ENCODE measurements at regions of chr10 and their contacts with region 1.

Region 1: DNA sequence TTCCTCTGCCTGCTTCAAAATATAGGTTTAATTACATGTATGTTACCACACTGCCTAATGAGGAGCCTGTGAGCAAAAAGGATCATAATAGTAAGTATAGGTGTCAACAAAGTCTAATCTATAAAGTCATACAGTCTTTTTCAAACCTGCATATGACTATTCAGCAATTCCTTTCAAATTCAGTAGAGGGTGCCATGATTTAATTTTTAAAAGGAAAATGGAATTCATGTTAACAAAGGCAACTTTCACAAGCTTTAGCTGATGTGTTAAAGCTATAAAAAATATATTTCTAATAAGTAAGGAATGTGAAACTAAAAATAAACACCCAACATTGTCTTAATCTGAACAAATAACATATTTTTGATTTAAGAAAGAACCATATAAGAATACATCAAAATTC is 52.1 kb downstream of the MPP7 start:
- DNase-seq: no peak
- H3K4me3 ChIP-seq: no peak overlapping the region
- H3K27me3 ChIP-seq: no peaks in the 10 kb centered on the region
- CTCF ChIP-seq: peak; percentile 42; the same call in 1 of the 2 replicates

Region 2: DNA sequence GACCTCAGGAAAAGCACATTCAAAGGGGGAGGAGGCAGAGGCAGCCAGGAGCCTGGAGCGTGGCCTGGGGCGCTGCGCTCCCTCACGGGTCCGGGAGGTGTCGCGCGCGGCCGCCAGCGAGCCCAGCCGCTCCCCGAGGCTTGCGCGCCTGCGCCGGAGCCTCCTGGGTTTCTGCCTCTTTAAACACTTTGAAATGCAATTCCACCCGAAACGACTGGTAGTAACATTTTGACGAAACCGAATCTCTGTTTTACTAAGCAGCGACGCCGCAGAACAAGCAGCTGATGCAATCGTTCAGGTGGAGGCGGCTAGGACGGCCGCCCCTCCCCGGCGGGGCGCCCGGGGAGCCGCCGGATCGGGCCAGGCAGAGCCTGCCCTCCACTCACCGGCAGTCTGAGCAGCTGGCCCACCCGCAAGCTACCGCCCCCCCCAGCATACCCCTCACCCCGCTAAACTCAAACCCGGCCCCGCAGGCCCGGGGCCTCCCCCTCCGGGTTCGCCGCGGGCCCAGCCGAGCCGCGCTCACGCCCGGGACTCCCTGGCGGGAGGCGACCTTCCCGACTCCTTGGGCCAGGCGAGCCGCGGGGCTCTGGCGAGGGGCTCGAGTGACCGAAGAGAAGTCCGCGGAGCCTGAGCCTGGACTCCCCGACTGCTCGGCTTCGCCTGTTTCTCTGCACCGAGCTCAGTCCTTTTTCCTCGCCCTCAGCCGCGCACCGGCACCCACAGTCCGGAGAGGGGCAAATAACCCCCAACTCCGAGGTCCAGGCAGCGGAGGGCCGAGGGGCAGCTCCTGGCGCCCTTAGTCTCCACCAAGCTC is 508.4 kb before region 1 on chr10:
- CTCF ChIA-PET with region 1: interaction called, 11 read pairs
- POLR2A ChIA-PET with region 1: no interaction called
- DNase-seq: peak; percentile 61
- H3K4me3 ChIP-seq: peak overlapping the region; percentile 91
- H3K27me3 ChIP-seq: no peaks in the 10 kb centered on the region
- CTCF ChIP-seq: peak; percentile 56

Region 3: GRCh38 chr10:28179006-28179742 is 71.6 kb before region 1 on chr10:
- CTCF ChIA-PET with region 1: no interaction called
- POLR2A ChIA-PET with region 1: no interaction called
- DNase-seq: no peak
- H3K4me3 ChIP-seq: no peak overlapping the region
- H3K27me3 ChIP-seq: no peaks in the 10 kb centered on the region
- CTCF ChIP-seq: peak; percentile 63

Region 4: GRCh38 chr10:28393966-28394568 is 143.3 kb after region 1 on chr10:
- CTCF ChIA-PET with region 1: interaction called, 42 read pairs
- POLR2A ChIA-PET with region 1: no interaction called
- DNase-seq: no peak
- H3K4me3 ChIP-seq: no peak overlapping the region
- H3K27me3 ChIP-seq: peaks cover under 1% of the 10 kb centered on the region; the same call in 1 of the 2 replicates
- CTCF ChIP-seq: peak; percentile 95